B cell (primary cell): ENCODE measurements at regions of chr17 and their contacts with region 1.

Region 1: DNA sequence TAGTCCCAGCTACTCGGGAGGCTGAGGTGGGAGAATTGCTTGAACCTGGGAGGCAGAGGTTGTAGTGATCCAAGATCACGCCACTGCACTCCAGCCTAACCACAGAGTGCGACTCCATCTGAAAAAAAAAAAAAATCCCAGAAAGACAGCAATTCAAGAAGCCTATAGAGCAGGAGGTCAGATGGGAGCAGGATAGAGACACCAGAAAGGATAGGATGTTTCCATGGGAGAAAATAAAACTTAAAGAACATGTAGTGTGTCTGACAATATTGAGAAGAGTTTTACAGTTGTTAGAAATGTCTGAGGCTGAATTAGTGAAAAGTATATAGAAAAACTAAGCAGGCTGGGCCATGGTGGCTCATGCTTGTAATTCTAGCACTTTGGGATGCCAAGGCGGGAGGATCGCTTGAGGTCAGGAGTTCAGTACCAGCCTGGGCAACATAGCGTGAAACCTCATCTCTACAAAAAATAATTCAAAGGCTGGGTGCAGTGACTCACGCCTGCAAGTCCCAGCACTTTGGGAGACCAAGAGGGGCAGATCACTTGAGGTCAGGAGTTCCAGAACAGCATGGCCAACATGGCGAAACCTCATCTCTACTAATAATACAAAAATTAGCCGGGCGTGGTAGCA is 15.3 kb upstream of the TRIM37 start:
- DNase-seq: no peak
- ATAC-seq: no peak
- H3K4me3 ChIP-seq: no peak overlapping the region
- H3K4me3 Mint-ChIP-seq: no peak overlapping the region
- H3K27ac ChIP-seq: no peak overlapping the region
- H3K27ac Mint-ChIP-seq: no peak overlapping the region
- H3K4me1 ChIP-seq: no peaks in the 10 kb centered on the region
- H3K4me1 Mint-ChIP-seq: peaks cover 1% of the 10 kb centered on the region
- H3K27me3 ChIP-seq: no peaks in the 10 kb centered on the region
- H3K27me3 Mint-ChIP-seq: no peaks in the 10 kb centered on the region
- CTCF ChIP-seq: no peak

Region 2: GRCh38 chr17:59026176-59026939 is 95.6 kb before region 1 on chr17:
- CTCF ChIA-PET with region 1: no interaction called
- POLR2A ChIA-PET with region 1: no interaction called
- intact Hi-C with region 1: no loop called
- DNase-seq: no peak
- ATAC-seq: no peak
- H3K4me3 ChIP-seq: no peak overlapping the region
- H3K4me3 Mint-ChIP-seq: no peak overlapping the region
- H3K27ac ChIP-seq: no peak overlapping the region
- H3K27ac Mint-ChIP-seq: no peak overlapping the region
- H3K4me1 ChIP-seq: no peaks in the 10 kb centered on the region
- H3K4me1 Mint-ChIP-seq: peaks cover 4% of the 10 kb centered on the region
- H3K27me3 ChIP-seq: no peaks in the 10 kb centered on the region
- H3K27me3 Mint-ChIP-seq: no peaks in the 10 kb centered on the region
- CTCF ChIP-seq: no peak

Region 3: GRCh38 chr17:59093702-59094231 is 28.2 kb before region 1 on chr17:
- CTCF ChIA-PET with region 1: no interaction called
- POLR2A ChIA-PET with region 1: no interaction called
- intact Hi-C with region 1: loop called (anchors 2 kb)
- DNase-seq: no peak
- ATAC-seq: no peak
- H3K4me3 ChIP-seq: no peak overlapping the region
- H3K4me3 Mint-ChIP-seq: no peak overlapping the region
- H3K27ac ChIP-seq: no peak overlapping the region
- H3K27ac Mint-ChIP-seq: no peak overlapping the region
- H3K4me1 ChIP-seq: peaks cover 0 to 6% of the 10 kb centered on the region in 2 donors
- H3K4me1 Mint-ChIP-seq: peaks cover 7% of the 10 kb centered on the region
- H3K27me3 ChIP-seq: no peaks in the 10 kb centered on the region
- H3K27me3 Mint-ChIP-seq: no peaks in the 10 kb centered on the region
- CTCF ChIP-seq: no peak